AG04449 (cell line): ENCODE measurements at regions of chr10 and their contacts with region 1.

Region 1: DNA sequence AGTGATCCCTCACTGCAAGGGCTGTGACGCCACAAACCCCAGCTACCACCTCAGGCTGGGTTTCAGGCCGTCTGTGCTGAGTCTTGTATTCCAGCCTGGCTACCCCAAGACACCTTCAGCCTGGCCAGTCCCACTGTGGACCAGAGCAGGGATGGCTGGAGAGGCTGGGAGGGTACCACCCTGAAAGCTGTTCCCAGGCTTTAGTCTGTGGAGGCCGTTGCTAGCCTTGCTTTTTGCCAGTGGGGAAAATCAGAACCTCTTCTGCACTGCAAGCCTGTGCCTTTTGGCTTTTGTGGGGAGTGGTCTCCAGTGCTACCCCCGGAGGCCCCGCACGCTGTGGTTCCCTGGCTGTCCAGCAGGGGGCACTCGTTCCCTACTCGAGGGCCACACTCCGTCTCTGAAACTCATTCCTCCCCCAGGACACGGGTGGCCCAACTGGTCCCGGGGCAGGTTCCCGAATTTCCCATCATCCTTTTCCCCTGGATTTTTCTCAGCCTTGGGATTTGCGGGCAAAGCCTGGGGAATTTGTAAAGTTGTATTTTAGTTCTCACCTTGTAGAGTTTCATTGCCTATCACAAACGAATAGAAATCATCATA is 128.4 kb upstream of the BTBD16 start:
- DNase-seq: no peak
- H3K4me3 ChIP-seq: no peak overlapping the region
- CTCF ChIP-seq: peak; percentile 94

Region 2: GRCh38 chr10:122112625-122113160 is 30.0 kb before region 1 on chr10:
- CTCF ChIA-PET with region 1: interaction called, 6 read pairs
- POLR2A ChIA-PET with region 1: interaction called, 11 read pairs
- DNase-seq: peak; percentile 57
- H3K4me3 ChIP-seq: peak overlapping the region; percentile 74
- CTCF ChIP-seq: peak; percentile 54

Region 3: GRCh38 chr10:122126763-122127659 is 15.7 kb before region 1 on chr10:
- CTCF ChIA-PET with region 1: interaction called, 22 read pairs
- POLR2A ChIA-PET with region 1: interaction called, 4 read pairs
- DNase-seq: peak; percentile 73
- H3K4me3 ChIP-seq: no peak overlapping the region
- CTCF ChIP-seq: no peak

Region 4: GRCh38 chr10:122154545-122155366 is 12.0 kb after region 1 on chr10:
- CTCF ChIA-PET with region 1: interaction called, 41 read pairs
- POLR2A ChIA-PET with region 1: no interaction called
- DNase-seq: no peak
- H3K4me3 ChIP-seq: peak overlapping the region; percentile 37
- CTCF ChIP-seq: peak; percentile 17

Region 5: DNA sequence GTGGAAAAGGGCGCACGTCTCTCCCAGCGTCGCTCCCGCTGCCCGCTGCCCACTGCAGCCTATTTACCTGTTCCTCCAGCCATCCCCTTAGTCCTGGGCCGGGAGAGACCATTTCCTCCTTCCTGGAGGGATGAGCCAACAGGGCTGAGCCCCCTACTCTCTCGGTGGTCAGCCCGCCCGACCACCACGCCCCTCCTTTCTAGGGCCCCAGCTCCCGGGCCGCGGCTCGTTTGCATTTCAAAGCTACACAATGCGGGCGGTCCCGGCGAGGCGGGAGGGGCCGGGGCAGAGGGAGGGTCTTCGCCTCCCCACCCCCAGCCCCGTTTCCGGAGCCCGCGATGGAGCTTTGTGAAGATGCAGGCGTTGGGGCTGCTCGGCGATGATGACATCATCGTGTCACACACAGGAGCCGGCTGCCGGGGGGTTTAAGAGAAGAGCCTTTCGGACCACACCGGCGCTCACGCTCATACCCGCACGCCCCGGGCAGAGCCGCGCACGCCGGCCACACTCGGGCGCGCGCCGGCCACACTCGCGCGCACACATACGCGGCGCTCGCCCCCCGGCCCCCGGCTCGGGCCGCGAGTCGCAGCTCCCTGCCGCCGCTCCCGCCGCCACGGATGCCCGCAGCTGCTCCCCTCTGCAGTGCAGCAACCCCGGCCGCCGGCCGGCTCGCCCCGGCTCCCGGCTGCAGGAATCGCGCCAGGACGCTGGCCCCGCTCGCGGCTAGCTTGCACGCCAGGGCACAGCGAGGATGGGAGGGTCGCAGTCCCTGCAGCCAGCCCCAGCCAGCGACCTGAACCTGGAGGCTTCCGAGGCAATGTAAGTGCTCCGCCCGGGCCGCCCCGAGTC is 20.7 kb after region 1 on chr10:
- CTCF ChIA-PET with region 1: interaction called, 18 read pairs
- POLR2A ChIA-PET with region 1: no interaction called
- DNase-seq: no peak
- H3K4me3 ChIP-seq: peak overlapping the region; percentile 57
- CTCF ChIP-seq: no peak

Region 6: DNA sequence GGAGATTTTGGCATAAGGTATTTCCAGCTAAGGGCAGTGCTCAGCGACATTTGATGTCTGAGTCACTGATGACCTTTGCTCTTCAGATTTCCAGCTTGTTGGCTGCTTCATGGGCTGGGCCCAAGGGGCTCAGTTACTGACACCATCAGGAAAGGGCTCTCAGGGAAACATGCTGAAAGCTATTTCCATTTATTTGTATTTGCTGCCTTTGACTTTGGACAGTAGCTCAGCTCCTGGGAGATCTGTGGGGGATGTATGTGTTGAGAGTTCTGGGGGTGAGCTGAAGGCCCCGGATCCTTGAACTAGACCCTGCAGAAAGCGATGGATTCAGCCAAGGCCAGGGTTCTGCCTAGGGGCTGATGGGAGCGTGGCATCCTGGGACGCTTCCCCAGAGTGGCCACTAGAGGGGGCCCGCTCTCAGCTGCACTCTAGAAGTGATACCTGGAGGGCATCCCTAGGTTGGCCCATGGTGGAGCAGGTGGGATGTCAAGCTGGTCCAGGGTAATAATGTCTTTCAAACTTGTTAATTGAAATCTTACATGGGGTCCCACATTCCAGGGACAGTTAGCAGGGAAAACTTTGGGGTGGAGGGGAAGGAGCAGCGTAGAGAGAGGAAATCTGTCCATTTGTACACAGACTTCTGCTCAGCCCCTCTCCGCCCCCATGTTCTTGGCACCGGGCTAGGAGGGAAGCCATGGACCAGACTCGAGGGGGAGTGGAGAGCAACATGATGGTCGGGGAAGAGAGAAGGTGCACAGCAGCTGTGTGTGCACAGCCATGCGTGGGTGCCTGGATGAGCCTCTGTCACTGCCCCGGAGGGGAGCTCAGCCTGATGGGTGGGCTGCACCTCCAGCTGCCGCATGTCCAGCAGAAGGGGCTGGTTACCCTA is 125.4 kb after region 1 on chr10:
- CTCF ChIA-PET with region 1: interaction called, 24 read pairs
- POLR2A ChIA-PET with region 1: no interaction called
- DNase-seq: no peak
- H3K4me3 ChIP-seq: no peak overlapping the region
- CTCF ChIP-seq: peak; percentile 95